ENCODE measurements at regions of chr9 and their contacts with region 1.

Region 1: DNA sequence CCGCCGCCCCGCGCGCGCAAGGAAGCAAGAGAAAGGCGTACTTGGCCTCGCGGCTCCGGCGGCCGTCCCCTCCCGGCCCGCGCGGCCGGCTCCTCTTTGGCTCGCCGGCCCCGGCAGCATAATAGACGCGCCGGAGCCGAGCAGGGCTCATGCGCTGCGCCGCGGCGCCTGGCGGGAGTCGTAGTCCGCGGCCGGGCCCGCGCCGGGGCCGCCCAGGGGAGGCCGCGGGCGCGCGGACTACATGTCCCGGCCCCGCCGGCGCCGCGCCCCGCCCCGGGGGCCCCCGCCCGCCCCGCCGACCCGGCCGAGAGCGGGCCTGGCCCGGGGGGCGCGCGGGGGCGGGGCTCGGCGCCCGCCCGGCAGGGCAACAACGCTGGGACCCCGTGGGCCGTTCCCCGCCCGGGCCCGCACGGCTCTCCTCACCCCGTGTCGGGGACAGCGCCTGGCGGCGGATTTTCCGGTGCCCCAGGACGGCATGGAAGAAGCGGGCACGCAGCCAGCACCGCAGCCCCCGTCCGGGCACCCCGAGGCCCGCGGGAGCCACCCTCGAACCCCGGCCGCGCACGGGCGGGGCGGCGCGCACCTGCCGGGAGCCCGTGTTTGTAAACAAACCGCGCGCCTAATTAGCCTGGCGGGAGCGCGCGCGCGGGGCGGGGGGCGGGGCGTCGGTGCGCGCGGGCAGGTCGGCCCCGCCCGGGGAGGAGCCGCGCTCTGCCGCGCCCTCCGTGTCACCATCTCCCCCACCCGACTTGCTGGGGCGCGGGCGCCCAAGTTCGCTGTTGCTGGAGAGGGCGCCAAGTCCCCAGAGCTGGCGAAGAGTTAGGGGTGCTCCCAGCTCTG is at the start of gene BRD3:
- DNase-seq: peak; percentile 79 to 86 (median 85)
- ATAC-seq: peak; percentile 88
- H3K4me3 ChIP-seq: peak within 1 kb of the TSS; percentile 97
- H3K4me3 Mint-ChIP-seq: peak within 1 kb of the TSS; percentile 88 to 97 (median 91)
- H3K27ac ChIP-seq: peak within 1 kb of the TSS; percentile 95
- H3K27ac Mint-ChIP-seq: peak within 1 kb of the TSS; percentile 80 to 97 (median 90)
- H3K4me1 ChIP-seq: peaks cover 21 to 26% of the 10 kb centered on the region in 2 donors
- H3K4me1 Mint-ChIP-seq: peaks cover 15 to 42% (median 29%) of the 10 kb centered on the region in 7 donors
- H3K27me3 ChIP-seq: peaks cover 0 to 4% of the 10 kb centered on the region in 2 donors
- H3K27me3 Mint-ChIP-seq: peaks cover 5 to 29% (median 14%) of the 10 kb centered on the region in 5 donors
- total RNA-seq, gene BRD3: 29.0 to 49.7 (median 40.4) TPM

Region 2: DNA sequence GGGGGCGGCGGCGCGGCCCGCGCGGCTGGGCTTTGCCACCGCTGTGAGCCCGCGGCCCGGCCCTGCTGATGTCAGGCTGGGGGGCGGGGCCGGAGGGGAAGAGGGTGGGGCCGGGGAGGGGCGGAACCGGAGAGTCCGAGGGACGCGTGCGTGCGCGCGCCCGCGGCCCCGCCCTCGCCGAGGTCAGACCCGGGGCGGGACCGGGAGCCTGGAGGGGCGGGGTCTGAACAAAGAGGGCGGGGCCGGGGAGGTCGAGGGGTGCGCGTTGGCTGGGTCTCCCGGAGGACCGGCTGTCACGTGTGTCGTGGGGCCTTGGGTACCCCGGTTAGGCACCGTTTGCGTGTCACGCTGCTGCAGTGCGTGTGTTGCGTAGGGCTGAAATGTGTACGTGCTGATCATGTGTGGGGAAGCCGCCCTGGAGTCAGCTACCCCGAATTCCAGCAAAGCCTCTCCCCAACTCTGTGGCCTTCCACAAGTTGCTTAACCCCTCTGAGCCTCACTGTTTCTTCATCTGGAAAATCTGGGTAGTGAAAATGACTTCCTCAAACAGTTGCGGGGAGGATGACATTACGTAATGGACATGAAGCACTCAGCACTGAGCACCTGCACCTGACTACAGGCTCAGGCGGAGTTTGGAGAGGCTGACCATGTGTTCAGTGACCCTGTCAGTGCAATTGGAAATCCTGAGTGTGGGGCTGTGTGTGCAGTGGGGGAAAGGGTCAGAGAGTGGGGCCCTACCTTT is 946.8 kb before region 1 on chr9 and contains the start of gene RALGDS:
- CTCF ChIA-PET with region 1: no interaction called
- POLR2A ChIA-PET with region 1: no interaction called
- intact Hi-C with region 1: loop called in 1 of 2 experiments (anchors 5 kb)
- DNase-seq: peak; percentile 79 to 93 (median 88)
- ATAC-seq: peak; percentile 91
- H3K4me3 ChIP-seq: peak within 1 kb of the TSS; percentile 58
- H3K4me3 Mint-ChIP-seq: peak within 1 kb of the TSS; percentile 78 to 88 (median 82)
- H3K27ac ChIP-seq: peak within 1 kb of the TSS; percentile 93
- H3K27ac Mint-ChIP-seq: peak within 1 kb of the TSS; percentile 58 to 99 (median 98)
- H3K4me1 ChIP-seq: peaks cover 22 to 52% of the 10 kb centered on the region in 2 donors
- H3K4me1 Mint-ChIP-seq: peaks cover 27 to 74% (median 47%) of the 10 kb centered on the region in 7 donors
- H3K27me3 ChIP-seq: no peaks in the 10 kb centered on the region
- H3K27me3 Mint-ChIP-seq: no peaks in the 10 kb centered on the region
- total RNA-seq, gene RALGDS: 73.9 to 123 (median 79.7) TPM

Region 3: GRCh38 chr9:133417541-133418461 is 650.3 kb before region 1 on chr9 and contains the start of gene REXO4:
- CTCF ChIA-PET with region 1: no interaction called
- POLR2A ChIA-PET with region 1: no interaction called
- intact Hi-C with region 1: loop called in 1 of 2 experiments (anchors 1 kb)
- DNase-seq: peak; percentile 73 to 88 (median 84)
- ATAC-seq: peak; percentile 93
- H3K4me3 ChIP-seq: peak within 1 kb of the TSS; percentile 87
- H3K4me3 Mint-ChIP-seq: peak within 1 kb of the TSS; percentile 88 to 93 (median 91)
- H3K27ac ChIP-seq: peak within 1 kb of the TSS; percentile 80
- H3K27ac Mint-ChIP-seq: peak within 1 kb of the TSS; percentile 81 to 94 (median 91)
- H3K4me1 ChIP-seq: peaks cover 13 to 14% of the 10 kb centered on the region in 2 donors
- H3K4me1 Mint-ChIP-seq: peaks cover 32 to 60% (median 54%) of the 10 kb centered on the region in 7 donors
- H3K27me3 ChIP-seq: no peaks in the 10 kb centered on the region
- H3K27me3 Mint-ChIP-seq: peaks cover 0 to 3% (median 0%) of the 10 kb centered on the region in 5 donors
- total RNA-seq, gene REXO4: 17.8 to 44.1 (median 28.6) TPM

Region 4: GRCh38 chr9:134010310-134011173 is 57.6 kb before region 1 on chr9:
- CTCF ChIA-PET with region 1: no interaction called
- POLR2A ChIA-PET with region 1: no interaction called
- intact Hi-C with region 1: no loop called
- DNase-seq: no peak
- ATAC-seq: no peak
- H3K4me3 ChIP-seq: no peak overlapping the region
- H3K4me3 Mint-ChIP-seq: no peak overlapping the region
- H3K27ac ChIP-seq: no peak overlapping the region
- H3K27ac Mint-ChIP-seq: no peak overlapping the region
- H3K4me1 ChIP-seq: no peaks in the 10 kb centered on the region
- H3K4me1 Mint-ChIP-seq: peaks cover 0 to 4% (median 0%) of the 10 kb centered on the region in 7 donors
- H3K27me3 ChIP-seq: no peaks in the 10 kb centered on the region
- H3K27me3 Mint-ChIP-seq: peaks cover 0 to 16% (median 8%) of the 10 kb centered on the region in 5 donors

Region 5: GRCh38 chr9:134099123-134099787 is 31.1 kb after region 1 on chr9:
- CTCF ChIA-PET with region 1: no interaction called
- POLR2A ChIA-PET with region 1: interaction called, 4 read pairs
- intact Hi-C with region 1: loop called (anchors 1 kb)
- DNase-seq: peak; percentile 13 to 60 (median 55)
- ATAC-seq: peak; percentile 90
- H3K4me3 ChIP-seq: no peak overlapping the region
- H3K4me3 Mint-ChIP-seq: no peak overlapping the region
- H3K27ac ChIP-seq: no peak overlapping the region
- H3K27ac Mint-ChIP-seq: no peak overlapping the region
- H3K4me1 ChIP-seq: no peaks in the 10 kb centered on the region
- H3K4me1 Mint-ChIP-seq: peaks cover 0 to 5% (median 3%) of the 10 kb centered on the region in 7 donors
- H3K27me3 ChIP-seq: no peaks in the 10 kb centered on the region
- H3K27me3 Mint-ChIP-seq: peaks cover 2 to 23% (median 15%) of the 10 kb centered on the region in 5 donors

Region 6: GRCh38 chr9:134128727-134129679 is 60.9 kb after region 1 on chr9:
- CTCF ChIA-PET with region 1: no interaction called
- POLR2A ChIA-PET with region 1: no interaction called
- intact Hi-C with region 1: no loop called
- DNase-seq: no peak
- ATAC-seq: no peak
- H3K4me3 ChIP-seq: no peak overlapping the region
- H3K4me3 Mint-ChIP-seq: no peak overlapping the region
- H3K27ac ChIP-seq: no peak overlapping the region
- H3K27ac Mint-ChIP-seq: no peak overlapping the region
- H3K4me1 ChIP-seq: no peaks in the 10 kb centered on the region
- H3K4me1 Mint-ChIP-seq: peaks cover 2 to 16% (median 8%) of the 10 kb centered on the region in 7 donors
- H3K27me3 ChIP-seq: no peaks in the 10 kb centered on the region
- H3K27me3 Mint-ChIP-seq: no peaks in the 10 kb centered on the region

Region 7: DNA sequence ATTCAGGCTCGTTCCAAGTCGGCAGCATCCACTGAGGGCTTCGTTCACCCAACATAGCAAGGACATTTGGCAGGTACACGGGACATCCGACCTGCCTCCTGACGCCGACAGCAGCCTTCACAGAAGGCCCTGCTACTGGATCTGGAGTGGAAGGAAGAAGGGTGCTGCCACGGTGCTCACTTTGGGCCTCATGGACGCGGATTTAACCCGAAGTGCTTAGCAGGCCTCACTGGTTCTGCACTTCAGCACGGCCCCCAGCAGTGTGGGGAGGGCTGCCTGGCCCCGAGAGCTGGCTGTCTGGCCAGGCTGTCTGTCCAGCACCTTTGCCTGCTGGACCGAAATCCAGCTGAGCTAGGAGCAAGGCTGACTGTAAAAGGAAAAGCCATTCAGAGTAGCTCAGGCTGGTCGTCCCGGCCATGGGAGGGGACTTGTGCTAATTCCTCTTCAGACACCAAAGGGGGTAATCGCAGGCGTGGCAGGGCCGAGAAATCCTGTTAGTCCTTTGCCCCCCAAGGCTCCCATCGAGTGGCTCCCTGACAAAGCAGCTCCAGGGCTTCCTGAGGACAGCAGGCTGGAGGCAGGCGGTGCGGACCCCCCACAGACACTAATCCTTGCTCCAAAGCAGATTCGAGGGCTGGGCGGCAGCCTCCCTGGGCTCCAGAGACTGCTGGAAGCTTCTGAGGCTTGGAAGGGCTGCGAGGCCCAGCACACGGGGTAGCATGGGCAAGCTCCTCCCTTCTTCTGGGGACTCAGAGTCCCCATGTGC is 247.0 kb after region 1 on chr9:
- CTCF ChIA-PET with region 1: no interaction called
- POLR2A ChIA-PET with region 1: no interaction called
- intact Hi-C with region 1: no loop called
- DNase-seq: no peak
- ATAC-seq: no peak
- H3K4me3 ChIP-seq: no peak overlapping the region
- H3K4me3 Mint-ChIP-seq: no peak overlapping the region
- H3K27ac ChIP-seq: no peak overlapping the region
- H3K27ac Mint-ChIP-seq: no peak overlapping the region
- H3K4me1 ChIP-seq: no peaks in the 10 kb centered on the region
- H3K4me1 Mint-ChIP-seq: peaks cover 0 to 3% (median 0%) of the 10 kb centered on the region in 7 donors
- H3K27me3 ChIP-seq: no peaks in the 10 kb centered on the region
- H3K27me3 Mint-ChIP-seq: peaks cover 4 to 13% (median 10%) of the 10 kb centered on the region in 5 donors

Region 8: DNA sequence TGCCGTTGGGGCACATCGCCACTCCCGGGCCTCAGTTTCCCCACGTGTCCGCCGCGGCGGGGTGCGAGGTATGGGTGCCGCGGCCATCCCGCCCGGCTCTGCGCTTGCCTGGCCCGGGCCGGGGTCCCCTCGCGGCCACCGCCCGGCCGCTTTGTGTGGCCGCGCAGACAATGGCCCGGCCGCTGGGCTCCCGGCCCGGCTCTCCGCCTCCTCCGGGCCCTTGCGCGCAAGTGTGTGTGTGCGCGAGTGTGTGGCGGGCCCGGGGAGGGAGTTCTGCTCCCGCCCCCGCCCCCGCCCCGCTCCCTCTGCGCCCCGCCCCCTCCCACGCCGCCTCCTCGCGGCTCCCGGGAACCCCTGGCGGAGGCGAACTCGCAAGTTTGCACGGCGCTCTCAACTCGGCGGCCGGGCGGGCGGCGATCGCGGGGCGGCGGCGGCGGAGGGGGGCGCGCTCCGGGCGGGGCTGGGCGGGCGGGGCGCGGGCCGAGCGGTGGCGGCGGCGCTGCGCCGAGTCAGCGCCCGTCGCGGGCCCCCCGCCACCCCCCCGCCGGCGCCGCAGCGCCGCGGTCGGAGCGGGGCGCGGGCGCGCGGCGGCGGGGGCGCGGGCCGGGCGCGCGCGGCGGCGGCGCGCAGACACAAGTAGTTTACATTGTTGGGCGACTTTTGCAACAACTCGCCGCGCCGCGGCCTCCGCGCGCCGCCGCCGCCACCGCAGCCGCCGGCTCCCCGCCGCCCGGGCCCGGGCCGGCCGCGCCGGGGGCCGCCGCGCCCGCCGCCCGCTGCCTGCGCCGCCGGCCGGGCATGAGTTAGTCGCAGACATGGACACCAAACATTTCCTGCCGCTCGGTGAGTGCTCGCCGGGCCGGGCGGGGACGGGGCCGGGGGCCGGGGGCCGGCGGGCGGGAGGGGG is 257.9 kb after region 1 on chr9 and contains the start of gene RXRA:
- CTCF ChIA-PET with region 1: no interaction called
- POLR2A ChIA-PET with region 1: no interaction called
- intact Hi-C with region 1: loop called in 1 of 2 experiments (anchors 2 kb)
- DNase-seq: peak; percentile 42 to 73 (median 61)
- ATAC-seq: peak; percentile 85
- H3K4me3 ChIP-seq: peak within 1 kb of the TSS; percentile 73
- H3K4me3 Mint-ChIP-seq: peak within 1 kb of the TSS; percentile 54 to 86 (median 75)
- H3K27ac ChIP-seq: peak within 1 kb of the TSS; percentile 62
- H3K27ac Mint-ChIP-seq: peak within 1 kb of the TSS in 5 of 9 donors; percentile 16 to 68 (median 47)
- H3K4me1 ChIP-seq: peaks cover 4 to 10% of the 10 kb centered on the region in 2 donors
- H3K4me1 Mint-ChIP-seq: peaks cover 0 to 17% (median 11%) of the 10 kb centered on the region in 7 donors
- H3K27me3 ChIP-seq: no peaks in the 10 kb centered on the region
- H3K27me3 Mint-ChIP-seq: peaks cover 0 to 52% (median 0%) of the 10 kb centered on the region in 5 donors
- total RNA-seq, gene RXRA: 5.9 to 59.5 (median 8.6) TPM

Region 9: GRCh38 chr9:134455934-134456739 is 388.0 kb after region 1 on chr9:
- CTCF ChIA-PET with region 1: no interaction called
- POLR2A ChIA-PET with region 1: no interaction called
- intact Hi-C with region 1: loop called in 1 of 2 experiments (anchors 2 kb)
- DNase-seq: peak; percentile 57 to 87 (median 80)
- ATAC-seq: peak; percentile 91
- H3K4me3 ChIP-seq: peak overlapping the region; percentile 63
- H3K4me3 Mint-ChIP-seq: peak overlapping the region; percentile 66 to 96 (median 84)
- H3K27ac ChIP-seq: peak overlapping the region; percentile 84
- H3K27ac Mint-ChIP-seq: peak overlapping the region; percentile 79 to 99 (median 95)
- H3K4me1 ChIP-seq: peaks cover 10 to 20% of the 10 kb centered on the region in 2 donors
- H3K4me1 Mint-ChIP-seq: peaks cover 0 to 19% (median 11%) of the 10 kb centered on the region in 7 donors
- H3K27me3 ChIP-seq: no peaks in the 10 kb centered on the region
- H3K27me3 Mint-ChIP-seq: no peaks in the 10 kb centered on the region

Measured in naive thymus-derived CD4-positive, alpha-beta T cell (primary cell).